B cell (primary cell): ENCODE measurements at regions of chr19 and their contacts with region 1.

Region 1: GRCh38 chr19:10112895-10113591 is 1.6 kb downstream of the P2RY11 start:
- DNase-seq: peak; percentile 78
- ATAC-seq: peak; percentile 48
- H3K4me3 ChIP-seq: peak overlapping the region in 1 of 5 experiments; percentile 9
- H3K4me3 Mint-ChIP-seq: peak overlapping the region; percentile 81
- H3K27ac ChIP-seq: peak overlapping the region in 1 of 2 donors; percentile 40
- H3K27ac Mint-ChIP-seq: peak overlapping the region; percentile 90
- H3K4me1 ChIP-seq: peaks cover 27 to 35% of the 10 kb centered on the region in 2 donors
- H3K4me1 Mint-ChIP-seq: peaks cover 38% of the 10 kb centered on the region
- H3K27me3 ChIP-seq: no peaks in the 10 kb centered on the region
- H3K27me3 Mint-ChIP-seq: no peaks in the 10 kb centered on the region
- CTCF ChIP-seq: peak; percentile 76

Region 2: GRCh38 chr19:9934132-9934950 is 178.7 kb before region 1 on chr19:
- CTCF ChIA-PET with region 1: interaction called, 10 read pairs
- POLR2A ChIA-PET with region 1: interaction called, 3 read pairs
- intact Hi-C with region 1: loop called (anchors 1 kb)
- DNase-seq: peak; percentile 84
- ATAC-seq: peak; percentile 82
- H3K4me3 ChIP-seq: no peak overlapping the region
- H3K4me3 Mint-ChIP-seq: no peak overlapping the region
- H3K27ac ChIP-seq: no peak overlapping the region
- H3K27ac Mint-ChIP-seq: no peak overlapping the region
- H3K4me1 ChIP-seq: peaks cover 22 to 30% of the 10 kb centered on the region in 2 donors
- H3K4me1 Mint-ChIP-seq: peaks cover 26% of the 10 kb centered on the region
- H3K27me3 ChIP-seq: peaks cover 0 to 60% (median 34%) of the 10 kb centered on the region in 4 experiments
- H3K27me3 Mint-ChIP-seq: peaks cover 51% of the 10 kb centered on the region
- CTCF ChIP-seq: peak; percentile 89

Region 3: DNA sequence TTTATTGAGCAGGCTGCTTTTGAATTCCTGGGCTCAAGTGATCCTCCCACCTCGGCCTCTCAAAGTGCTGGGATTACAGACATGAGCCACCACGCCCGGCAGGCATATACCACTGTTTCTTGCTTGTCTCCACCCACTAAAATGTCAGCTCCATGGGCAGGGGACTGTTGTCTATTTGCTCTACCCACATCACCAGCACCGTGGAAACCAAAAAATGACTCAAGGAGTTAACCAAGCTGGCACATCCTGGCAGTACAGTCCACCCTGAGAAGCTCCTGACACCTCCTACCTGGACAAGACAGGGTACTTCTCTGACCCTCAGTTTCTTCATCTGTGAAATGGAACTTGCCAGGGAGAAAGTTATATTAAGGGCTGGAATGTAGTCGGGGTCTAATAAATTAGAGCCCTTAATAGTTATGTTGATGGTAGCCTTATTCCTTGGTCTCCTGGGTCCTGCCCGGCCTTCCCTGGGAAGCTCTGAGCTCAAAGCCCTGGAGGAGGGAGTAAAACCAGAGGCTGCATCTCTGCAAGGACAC is 85.8 kb before region 1 on chr19:
- CTCF ChIA-PET with region 1: interaction called, 6 read pairs
- POLR2A ChIA-PET with region 1: interaction called, 3 read pairs
- intact Hi-C with region 1: loop called (anchors 2 kb)
- DNase-seq: no peak
- ATAC-seq: no peak
- H3K4me3 ChIP-seq: no peak overlapping the region
- H3K4me3 Mint-ChIP-seq: no peak overlapping the region
- H3K27ac ChIP-seq: no peak overlapping the region
- H3K27ac Mint-ChIP-seq: no peak overlapping the region
- H3K4me1 ChIP-seq: peaks cover 6 to 8% of the 10 kb centered on the region in 2 donors
- H3K4me1 Mint-ChIP-seq: peaks cover 3% of the 10 kb centered on the region
- H3K27me3 ChIP-seq: peaks cover 0 to 29% (median 11%) of the 10 kb centered on the region in 4 experiments
- H3K27me3 Mint-ChIP-seq: peaks cover 18% of the 10 kb centered on the region
- CTCF ChIP-seq: no peak

Region 4: GRCh38 chr19:10074153-10074552 is 38.9 kb before region 1 on chr19:
- CTCF ChIA-PET with region 1: interaction called, 5 read pairs
- POLR2A ChIA-PET with region 1: no interaction called
- intact Hi-C with region 1: loop called (anchors 1 kb)
- DNase-seq: peak; percentile 63
- ATAC-seq: peak; percentile 17
- H3K4me3 ChIP-seq: no peak overlapping the region
- H3K4me3 Mint-ChIP-seq: no peak overlapping the region
- H3K27ac ChIP-seq: no peak overlapping the region
- H3K27ac Mint-ChIP-seq: no peak overlapping the region
- H3K4me1 ChIP-seq: no peaks in the 10 kb centered on the region
- H3K4me1 Mint-ChIP-seq: no peaks in the 10 kb centered on the region
- H3K27me3 ChIP-seq: no peaks in the 10 kb centered on the region
- H3K27me3 Mint-ChIP-seq: peaks cover 10% of the 10 kb centered on the region
- CTCF ChIP-seq: peak; percentile 23

Region 5: GRCh38 chr19:10095948-10096621 is 17.0 kb before region 1 on chr19:
- CTCF ChIA-PET with region 1: interaction called, 263 read pairs
- POLR2A ChIA-PET with region 1: interaction called, 62 read pairs
- intact Hi-C with region 1: loop called (anchors 1 kb)
- DNase-seq: peak; percentile 96
- ATAC-seq: peak; percentile 91
- H3K4me3 ChIP-seq: peak overlapping the region in 4 of 5 experiments; percentile 40 to 55 (median 50)
- H3K4me3 Mint-ChIP-seq: peak overlapping the region; percentile 69
- H3K27ac ChIP-seq: peak overlapping the region; percentile 62 to 74
- H3K27ac Mint-ChIP-seq: peak overlapping the region; percentile 67
- H3K4me1 ChIP-seq: peaks cover 27 to 49% of the 10 kb centered on the region in 2 donors
- H3K4me1 Mint-ChIP-seq: peaks cover 39% of the 10 kb centered on the region
- H3K27me3 ChIP-seq: no peaks in the 10 kb centered on the region
- H3K27me3 Mint-ChIP-seq: no peaks in the 10 kb centered on the region
- CTCF ChIP-seq: no peak

Region 6: DNA sequence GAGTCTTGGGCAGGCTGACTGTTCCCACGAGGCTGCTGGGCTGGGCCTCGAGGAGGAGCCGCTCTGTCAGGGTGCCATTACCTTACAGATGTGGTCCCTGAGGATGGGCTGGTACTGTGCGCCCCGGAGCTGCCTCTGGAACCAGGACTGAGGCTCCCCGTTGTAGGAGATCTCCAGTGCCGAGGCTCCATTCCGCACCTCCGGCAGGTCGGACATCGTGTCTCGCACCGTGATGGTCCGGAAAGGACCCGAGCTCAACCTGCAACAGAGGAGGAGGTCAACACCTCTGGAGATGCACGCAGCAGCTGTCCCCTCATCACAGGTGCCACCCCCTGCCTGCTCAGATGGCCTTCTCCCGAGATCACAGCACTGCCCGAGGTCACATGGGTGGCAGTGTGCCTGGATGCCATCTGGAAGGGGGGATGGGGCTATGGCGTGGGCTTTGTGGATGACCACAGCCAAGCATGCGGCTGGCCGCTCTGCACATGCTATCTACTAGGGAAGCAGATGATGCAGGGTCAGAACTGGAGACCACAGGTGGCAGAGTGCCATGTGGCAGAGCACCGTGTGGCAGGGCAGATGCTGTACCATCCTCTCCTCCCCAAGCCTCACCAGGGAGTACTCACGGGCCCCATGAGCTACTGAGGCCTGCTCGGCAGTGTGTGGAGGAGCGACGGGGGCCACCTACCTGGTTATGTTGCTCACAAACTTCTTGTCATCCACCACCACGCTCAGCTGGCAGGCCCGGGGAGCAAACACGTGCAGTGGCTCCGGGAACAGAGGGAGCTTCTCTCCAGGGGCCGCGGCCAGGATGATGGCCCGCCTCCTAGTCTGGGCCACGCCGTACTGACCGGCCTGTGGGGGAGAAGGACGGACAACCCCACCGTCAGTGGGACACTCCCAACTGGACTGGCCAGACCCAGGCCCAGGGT is 25.0 kb after region 1 on chr19:
- CTCF ChIA-PET with region 1: no interaction called
- POLR2A ChIA-PET with region 1: no interaction called
- intact Hi-C with region 1: no loop called
- DNase-seq: no peak
- ATAC-seq: no peak
- H3K4me3 ChIP-seq: no peak overlapping the region
- H3K4me3 Mint-ChIP-seq: no peak overlapping the region
- H3K27ac ChIP-seq: no peak overlapping the region
- H3K27ac Mint-ChIP-seq: no peak overlapping the region
- H3K4me1 ChIP-seq: no peaks in the 10 kb centered on the region
- H3K4me1 Mint-ChIP-seq: no peaks in the 10 kb centered on the region
- H3K27me3 ChIP-seq: no peaks in the 10 kb centered on the region
- H3K27me3 Mint-ChIP-seq: no peaks in the 10 kb centered on the region
- CTCF ChIP-seq: no peak

Region 7: GRCh38 chr19:10226376-10227025 is 113.5 kb after region 1 on chr19:
- CTCF ChIA-PET with region 1: no interaction called
- POLR2A ChIA-PET with region 1: no interaction called
- intact Hi-C with region 1: no loop called
- DNase-seq: no peak
- ATAC-seq: no peak
- H3K4me3 ChIP-seq: no peak overlapping the region
- H3K4me3 Mint-ChIP-seq: no peak overlapping the region
- H3K27ac ChIP-seq: no peak overlapping the region
- H3K27ac Mint-ChIP-seq: peak overlapping the region; percentile 13
- H3K4me1 ChIP-seq: peaks cover 15 to 27% of the 10 kb centered on the region in 2 donors
- H3K4me1 Mint-ChIP-seq: peaks cover 26% of the 10 kb centered on the region
- H3K27me3 ChIP-seq: no peaks in the 10 kb centered on the region
- H3K27me3 Mint-ChIP-seq: no peaks in the 10 kb centered on the region
- CTCF ChIP-seq: no peak

Region 8: GRCh38 chr19:10424011-10424637 is 311.1 kb after region 1 on chr19:
- CTCF ChIA-PET with region 1: interaction called, 4 read pairs
- POLR2A ChIA-PET with region 1: interaction called, 12 read pairs
- intact Hi-C with region 1: no loop called
- DNase-seq: peak; percentile 73
- ATAC-seq: peak; percentile 3
- H3K4me3 ChIP-seq: peak overlapping the region; percentile 19 to 66 (median 41)
- H3K4me3 Mint-ChIP-seq: peak overlapping the region; percentile 91
- H3K27ac ChIP-seq: no peak overlapping the region
- H3K27ac Mint-ChIP-seq: peak overlapping the region; percentile 95
- H3K4me1 ChIP-seq: peaks cover 78 to 85% of the 10 kb centered on the region in 2 donors
- H3K4me1 Mint-ChIP-seq: peaks cover 79% of the 10 kb centered on the region
- H3K27me3 ChIP-seq: peaks cover 0 to 52% (median 27%) of the 10 kb centered on the region in 4 experiments
- H3K27me3 Mint-ChIP-seq: peaks cover 30% of the 10 kb centered on the region
- CTCF ChIP-seq: peak; percentile 74